Breast epithelium (tissue), 4 donors: ENCODE measurements at regions of chr5 and their contacts with region 1.

Region 1: GRCh38 chr5:119484893-119485292 is 32.6 kb downstream of the HSD17B4 start:
- DNase-seq: no peak
- H3K4me3 ChIP-seq: no peak overlapping the region
- H3K27ac ChIP-seq: no peak overlapping the region
- H3K4me1 ChIP-seq: no peaks in the 10 kb centered on the region
- H3K27me3 ChIP-seq: no peaks in the 10 kb centered on the region
- CTCF ChIP-seq: no peak
- POLR2A ChIP-seq: no peak

Region 2: DNA sequence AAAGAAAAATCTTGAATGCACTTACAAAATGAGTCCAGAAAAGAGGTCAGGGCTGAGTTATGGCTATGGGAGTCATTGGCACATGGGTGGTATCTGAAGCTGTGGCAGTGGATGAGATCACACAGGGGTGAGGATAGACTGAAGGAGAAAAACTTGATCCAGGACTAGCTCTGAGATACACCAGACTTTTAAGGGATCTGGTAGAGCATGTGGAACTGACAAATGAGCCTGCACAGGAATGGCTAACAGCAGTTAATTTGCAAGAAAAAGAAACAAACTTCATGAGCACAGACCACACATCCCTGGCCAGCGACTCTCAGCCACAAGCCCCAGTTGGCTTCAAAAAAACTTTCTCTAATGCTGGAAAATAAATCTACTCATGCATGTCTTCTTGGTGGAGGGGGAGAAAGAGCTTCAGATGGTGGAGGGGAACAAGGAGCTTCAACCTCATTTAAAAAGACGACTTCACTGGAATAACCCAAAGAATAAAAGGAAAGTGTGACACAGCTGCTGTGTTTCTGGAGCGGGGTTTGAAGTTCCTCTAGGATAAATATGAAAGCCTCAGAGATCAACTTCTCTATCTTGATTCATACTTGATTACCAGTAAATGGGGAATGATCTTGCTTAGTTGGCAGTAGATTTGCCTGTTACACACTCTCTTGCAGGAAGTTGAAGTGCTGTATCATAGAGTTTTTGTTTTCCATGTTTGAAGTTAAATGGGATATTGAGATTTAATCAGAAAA is 95.4 kb before region 1 on chr5:
- intact Hi-C with region 1: loop called (anchors 5 kb)
- DNase-seq: no peak
- H3K4me3 ChIP-seq: no peak overlapping the region
- H3K27ac ChIP-seq: no peak overlapping the region
- H3K4me1 ChIP-seq: peaks cover 0 to 8% of the 10 kb centered on the region in 2 donors
- H3K27me3 ChIP-seq: no peaks in the 10 kb centered on the region
- CTCF ChIP-seq: no peak
- POLR2A ChIP-seq: no peak

Region 3: GRCh38 chr5:119860463-119860862 is 375.6 kb after region 1 on chr5:
- intact Hi-C with region 1: no loop called
- DNase-seq: no peak
- H3K4me3 ChIP-seq: no peak overlapping the region
- H3K27ac ChIP-seq: no peak overlapping the region
- H3K4me1 ChIP-seq: no peaks in the 10 kb centered on the region
- H3K27me3 ChIP-seq: no peaks in the 10 kb centered on the region
- CTCF ChIP-seq: no peak
- POLR2A ChIP-seq: no peak